ENCODE measurements at regions of chr20 and their contacts with region 1.

Region 1: GRCh38 chr20:31630187-31630790 is 7.4 kb upstream of the COX4I2 start:
- DNase-seq: peak; percentile 63
- H3K4me3 Mint-ChIP-seq: no peak overlapping the region
- H3K27ac Mint-ChIP-seq: no peak overlapping the region
- H3K4me1 Mint-ChIP-seq: no peaks in the 10 kb centered on the region
- H3K27me3 Mint-ChIP-seq: no peaks in the 10 kb centered on the region
- CTCF ChIP-seq: no peak

Region 2: GRCh38 chr20:31555203-31555775 is 75.0 kb before region 1 on chr20:
- CTCF ChIA-PET with region 1: interaction called, 47 read pairs
- POLR2A ChIA-PET with region 1: no interaction called
- intact Hi-C with region 1: no loop called
- DNase-seq: no peak
- H3K4me3 Mint-ChIP-seq: no peak overlapping the region
- H3K27ac Mint-ChIP-seq: peak overlapping the region; percentile 12
- H3K4me1 Mint-ChIP-seq: peaks cover 12% of the 10 kb centered on the region
- H3K27me3 Mint-ChIP-seq: no peaks in the 10 kb centered on the region
- CTCF ChIP-seq: no peak

Region 3: DNA sequence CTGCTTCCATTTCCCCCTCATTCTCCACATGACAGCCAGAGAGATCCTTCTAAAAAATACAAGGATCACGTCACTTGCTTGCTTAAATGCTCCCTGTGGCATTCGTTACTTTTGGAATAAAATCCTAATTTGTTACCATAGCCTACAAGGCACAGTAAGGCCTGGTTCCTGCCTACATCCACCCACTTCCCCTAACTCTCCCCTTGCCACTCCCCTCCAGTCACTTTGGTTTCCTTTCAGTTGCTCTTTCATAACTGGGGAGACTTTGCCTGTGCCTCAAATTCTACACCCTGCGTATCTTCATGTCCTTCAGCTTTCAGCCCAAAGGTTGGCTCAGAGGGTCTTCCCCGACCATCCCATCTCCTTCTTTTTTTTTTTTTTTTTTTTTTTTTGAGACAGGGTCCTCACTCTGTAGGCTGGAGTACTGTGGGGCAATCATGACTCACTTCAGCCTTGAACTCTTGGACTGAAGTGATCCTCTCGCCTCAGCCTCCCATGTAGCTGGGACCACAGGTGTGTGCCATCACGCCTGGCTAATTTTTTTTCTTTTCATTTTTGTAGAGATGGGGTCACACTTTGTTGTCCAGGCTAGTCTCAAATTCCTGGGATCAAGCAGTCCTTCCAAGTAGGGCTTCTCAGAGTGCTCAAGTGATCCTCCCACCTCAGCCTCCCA is 12.7 kb before region 1 on chr20:
- CTCF ChIA-PET with region 1: interaction called, 29 read pairs
- POLR2A ChIA-PET with region 1: interaction called, 7 read pairs
- intact Hi-C with region 1: no loop called
- DNase-seq: no peak
- H3K4me3 Mint-ChIP-seq: no peak overlapping the region
- H3K27ac Mint-ChIP-seq: no peak overlapping the region
- H3K4me1 Mint-ChIP-seq: no peaks in the 10 kb centered on the region
- H3K27me3 Mint-ChIP-seq: no peaks in the 10 kb centered on the region
- CTCF ChIP-seq: no peak

Region 4: GRCh38 chr20:31652917-31653396 is 22.7 kb after region 1 on chr20:
- CTCF ChIA-PET with region 1: interaction called, 73 read pairs
- POLR2A ChIA-PET with region 1: interaction called, 5 read pairs
- intact Hi-C with region 1: no loop called
- DNase-seq: peak; percentile 83
- H3K4me3 Mint-ChIP-seq: peak overlapping the region; percentile 2
- H3K27ac Mint-ChIP-seq: peak overlapping the region; percentile 57
- H3K4me1 Mint-ChIP-seq: peaks cover 12% of the 10 kb centered on the region
- H3K27me3 Mint-ChIP-seq: no peaks in the 10 kb centered on the region
- CTCF ChIP-seq: no peak

Region 5: DNA sequence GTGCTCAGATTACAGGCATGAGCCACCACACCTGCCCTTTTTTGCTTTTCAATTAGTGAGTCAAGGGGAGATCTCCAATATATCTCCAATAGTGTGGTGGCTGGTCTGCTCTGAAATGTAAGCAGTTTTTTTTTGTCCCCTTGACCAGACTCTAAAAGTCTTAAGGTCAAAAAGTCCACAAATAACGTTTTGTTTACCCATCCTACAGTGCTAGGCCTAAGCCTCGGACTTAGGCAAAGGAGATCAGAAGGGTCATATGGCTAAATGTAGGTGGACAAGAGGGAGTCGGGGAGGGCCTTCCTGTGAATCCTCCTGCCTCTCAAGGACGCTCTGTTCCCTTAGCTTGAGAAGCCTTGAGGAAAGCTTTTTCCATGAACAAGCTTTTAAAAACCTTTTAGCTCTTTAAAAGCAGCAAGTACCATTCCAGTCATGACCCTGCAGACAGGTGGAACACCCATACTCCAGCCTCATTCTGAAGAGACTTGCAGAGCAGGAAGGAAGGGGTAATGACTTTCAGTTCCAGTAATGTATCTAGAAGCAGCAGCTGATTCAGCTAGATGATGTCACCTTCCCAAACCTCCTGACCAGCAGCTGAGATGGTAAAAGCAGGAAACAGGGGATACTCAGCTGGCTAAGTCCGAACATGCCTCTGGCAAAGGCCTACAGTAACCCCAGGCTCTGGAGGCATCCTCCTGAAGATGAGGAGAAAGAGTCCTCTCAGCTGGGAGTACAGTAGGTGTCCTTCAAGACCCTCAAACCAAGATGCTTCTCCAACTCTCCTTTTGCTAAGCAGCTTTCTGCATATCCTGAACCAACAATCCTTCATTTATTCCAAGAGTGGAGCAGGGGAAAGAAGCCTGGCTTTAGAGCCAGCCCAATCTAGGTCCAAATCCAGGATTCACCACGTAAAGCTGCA is 68.8 kb after region 1 on chr20:
- CTCF ChIA-PET with region 1: interaction called, 15 read pairs
- POLR2A ChIA-PET with region 1: no interaction called
- intact Hi-C with region 1: no loop called
- DNase-seq: peak; percentile 76
- H3K4me3 Mint-ChIP-seq: peak overlapping the region; percentile 52
- H3K27ac Mint-ChIP-seq: peak overlapping the region; percentile 97
- H3K4me1 Mint-ChIP-seq: peaks cover 55% of the 10 kb centered on the region
- H3K27me3 Mint-ChIP-seq: no peaks in the 10 kb centered on the region
- CTCF ChIP-seq: no peak

Measured in MCF 10A (cell line).